ENCODE measurements at regions of chr9 and their contacts with region 1.

Region 1: GRCh38 chr9:101533334-101534107 is at the start of gene RNF20:
- DNase-seq: peak; percentile 100
- H3K4me3 Mint-ChIP-seq: peak within 1 kb of the TSS; percentile 79
- H3K27ac Mint-ChIP-seq: peak within 1 kb of the TSS; percentile 93
- H3K4me1 Mint-ChIP-seq: peaks cover 14% of the 10 kb centered on the region
- H3K27me3 Mint-ChIP-seq: peaks cover 5% of the 10 kb centered on the region
- total RNA-seq, gene RNF20: 42.0 to 45.9 TPM

Region 2: GRCh38 chr9:100098887-100099721 is 1434.4 kb before region 1 on chr9 and contains the starts of genes ERP44 and INVS:
- CTCF ChIA-PET with region 1: no interaction called
- intact Hi-C with region 1: loop called (anchors 2 kb)
- DNase-seq: peak; percentile 99
- H3K4me3 Mint-ChIP-seq: peak within 1 kb of the TSS; percentile 97
- H3K27ac Mint-ChIP-seq: peak within 1 kb of the TSS; percentile 79
- H3K4me1 Mint-ChIP-seq: peaks cover 29% of the 10 kb centered on the region
- H3K27me3 Mint-ChIP-seq: no peaks in the 10 kb centered on the region
- total RNA-seq, gene ERP44: 9.1 to 9.5 TPM
- total RNA-seq, gene INVS: 5.7 to 7.3 TPM

Region 3: DNA sequence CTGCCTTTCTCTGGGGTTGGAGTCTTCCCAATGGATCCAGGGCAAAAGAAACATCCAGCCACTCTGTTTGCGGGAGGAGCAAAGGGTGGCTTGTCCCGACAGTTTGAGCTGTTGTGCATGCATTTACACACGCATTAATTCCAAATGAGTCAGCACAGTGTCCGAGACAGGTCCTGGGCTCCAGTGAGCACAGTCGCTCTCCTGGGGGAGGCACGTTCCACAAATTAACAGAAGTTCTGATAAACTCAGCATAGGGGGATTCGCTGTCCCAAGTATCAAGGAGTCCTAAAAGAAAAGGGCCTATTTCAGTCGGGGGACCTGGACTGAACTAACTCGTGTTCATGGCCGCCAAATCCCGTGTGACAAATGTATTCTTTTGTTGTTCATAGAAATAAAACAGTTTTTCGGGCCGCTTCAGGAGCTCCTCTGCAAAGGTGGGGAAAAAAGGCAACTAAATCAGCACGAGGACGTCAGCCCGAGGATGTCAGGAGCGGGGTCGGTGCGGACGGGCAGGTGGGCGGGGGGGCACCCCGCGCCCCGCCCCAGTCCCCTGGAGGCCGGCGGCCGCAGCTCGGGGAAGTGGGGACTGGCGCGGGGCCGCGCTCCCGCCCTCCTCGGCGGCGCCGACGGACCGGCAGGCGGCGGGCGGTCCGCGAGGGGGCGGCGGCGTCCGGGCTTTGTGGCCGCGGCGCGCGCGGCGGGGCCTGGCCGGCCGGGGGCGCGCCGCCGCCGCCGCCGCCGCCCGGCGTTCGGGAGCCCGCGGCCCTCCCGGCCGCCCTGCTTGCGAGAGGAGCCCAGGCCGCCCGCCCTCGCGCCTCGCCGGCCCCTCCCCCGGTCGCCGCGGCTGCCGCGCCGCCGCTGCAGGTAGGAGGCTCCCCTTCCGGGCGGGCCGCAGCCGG is 1106.7 kb before region 1 on chr9 and contains the start of gene MSANTD3:
- CTCF ChIA-PET with region 1: no interaction called
- intact Hi-C with region 1: loop called (anchors 2 kb)
- DNase-seq: peak; percentile 52
- H3K4me3 Mint-ChIP-seq: peak within 1 kb of the TSS; percentile 91
- H3K27ac Mint-ChIP-seq: peak within 1 kb of the TSS; percentile 82
- H3K4me1 Mint-ChIP-seq: peaks cover 30% of the 10 kb centered on the region
- H3K27me3 Mint-ChIP-seq: no peaks in the 10 kb centered on the region
- total RNA-seq, gene MSANTD3: 10.4 to 11.5 TPM

Region 4: GRCh38 chr9:101119206-101119819 is 414.2 kb before region 1 on chr9:
- CTCF ChIA-PET with region 1: no interaction called
- intact Hi-C with region 1: loop called (anchors 2 kb)
- DNase-seq: peak; percentile 42
- H3K4me3 Mint-ChIP-seq: no peak overlapping the region
- H3K27ac Mint-ChIP-seq: no peak overlapping the region
- H3K4me1 Mint-ChIP-seq: no peaks in the 10 kb centered on the region
- H3K27me3 Mint-ChIP-seq: no peaks in the 10 kb centered on the region

Region 5: DNA sequence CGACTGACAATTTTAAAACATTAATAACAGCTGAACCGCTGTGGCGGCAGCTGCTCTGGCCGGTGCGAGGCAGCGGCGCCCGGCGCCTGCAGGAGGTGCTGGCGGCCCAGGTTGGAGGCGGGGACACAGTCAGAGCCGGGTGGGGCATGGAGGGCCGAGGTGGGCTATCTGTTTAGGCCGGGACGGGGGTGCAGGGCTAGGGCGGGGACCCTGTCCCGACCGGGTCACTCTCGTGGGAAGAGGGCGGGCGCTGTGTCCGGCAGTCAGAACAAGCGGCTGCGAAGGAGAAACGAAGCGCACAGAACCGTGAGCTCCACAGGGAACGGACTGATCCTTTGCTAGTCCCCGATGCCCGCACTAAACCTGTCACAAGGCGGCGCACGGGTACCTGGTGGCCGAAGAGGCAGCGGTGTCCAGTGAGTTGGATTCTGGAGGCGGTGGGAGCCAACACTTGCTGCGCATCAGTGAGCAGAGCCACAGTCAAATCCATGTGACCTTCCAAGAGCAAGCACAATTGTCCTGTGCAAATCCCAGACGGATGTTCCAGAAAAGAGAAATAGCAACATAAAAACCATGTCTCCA is 84.3 kb before region 1 on chr9:
- CTCF ChIA-PET with region 1: interaction called, 7 read pairs
- intact Hi-C with region 1: loop called (anchors 1 kb)
- DNase-seq: peak; percentile 50
- H3K4me3 Mint-ChIP-seq: peak overlapping the region; percentile 53
- H3K27ac Mint-ChIP-seq: no peak overlapping the region
- H3K4me1 Mint-ChIP-seq: peaks cover 9% of the 10 kb centered on the region
- H3K27me3 Mint-ChIP-seq: peaks cover 52% of the 10 kb centered on the region

Region 6: GRCh38 chr9:101465392-101465791 is 68.1 kb before region 1 on chr9:
- CTCF ChIA-PET with region 1: interaction called, 4 read pairs
- intact Hi-C with region 1: loop called (anchors 1 kb)
- DNase-seq: peak; percentile 25
- H3K4me3 Mint-ChIP-seq: no peak overlapping the region
- H3K27ac Mint-ChIP-seq: no peak overlapping the region
- H3K4me1 Mint-ChIP-seq: no peaks in the 10 kb centered on the region
- H3K27me3 Mint-ChIP-seq: peaks cover 39% of the 10 kb centered on the region

Region 7: DNA sequence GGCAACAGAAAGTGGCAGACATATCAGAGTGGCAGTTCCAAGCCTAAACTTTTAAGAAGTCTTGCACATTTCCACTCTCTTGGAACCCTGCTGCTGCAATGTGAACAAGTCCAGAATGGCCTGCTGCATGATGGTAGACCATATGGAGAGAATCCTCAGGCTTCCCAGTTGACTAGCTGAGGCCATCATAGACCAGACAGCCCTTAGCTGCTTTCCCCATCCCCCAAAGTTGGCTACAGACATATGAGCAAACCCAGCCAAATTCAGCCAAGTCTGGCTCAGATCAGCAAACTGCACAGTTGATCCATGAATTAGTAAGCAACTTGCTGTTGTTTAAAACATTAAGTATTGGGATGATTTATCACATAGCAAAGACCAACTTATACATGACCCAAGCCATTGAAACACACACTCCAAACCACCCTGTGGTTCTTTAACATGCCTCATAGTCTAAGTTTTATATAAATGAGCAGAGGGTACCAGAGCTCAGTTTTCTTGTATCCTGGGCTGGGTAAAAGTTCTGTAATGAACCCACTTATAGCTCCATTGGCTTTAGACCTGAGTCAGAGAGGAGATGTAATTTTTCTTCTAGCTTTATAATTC is 41.3 kb after region 1 on chr9:
- CTCF ChIA-PET with region 1: no interaction called
- intact Hi-C with region 1: no loop called
- DNase-seq: no peak
- H3K4me3 Mint-ChIP-seq: no peak overlapping the region
- H3K27ac Mint-ChIP-seq: no peak overlapping the region
- H3K4me1 Mint-ChIP-seq: peaks cover 51% of the 10 kb centered on the region
- H3K27me3 Mint-ChIP-seq: no peaks in the 10 kb centered on the region

Measured in activated naive CD4-positive, alpha-beta T cell treated with anti-CD3 and anti-CD28 coated beads for 36 hours (primary cell).